Mammary epithelial cell (primary cell): ENCODE measurements at regions of chr19 and their contacts with region 1.

Region 1: DNA sequence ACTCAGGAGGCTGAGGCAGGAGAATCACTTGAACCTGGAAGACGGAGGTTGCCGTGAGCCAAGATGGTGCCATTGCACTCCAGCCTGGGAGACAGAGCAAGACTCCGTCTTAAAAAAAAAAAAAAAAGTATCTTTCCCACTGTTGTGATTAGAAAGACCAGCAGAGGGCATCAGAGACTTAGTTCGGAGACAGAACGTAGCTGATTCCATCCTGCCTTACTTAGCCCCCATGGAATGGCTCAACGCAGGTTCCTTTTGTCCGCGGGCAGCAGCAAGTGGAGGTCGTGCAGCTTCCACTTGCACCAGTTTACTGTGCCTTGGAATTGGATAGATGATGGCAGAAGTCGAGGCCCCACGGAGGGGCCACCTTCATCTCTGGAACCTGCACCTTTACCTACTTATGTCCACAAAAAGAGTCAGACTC is 8.1 kb downstream of the TIMM29 start:
- DNase-seq: peak; percentile 64
- H3K4me3 ChIP-seq: no peak overlapping the region
- H3K27ac ChIP-seq: no peak overlapping the region
- H3K4me1 ChIP-seq: peaks cover 21% of the 10 kb centered on the region
- H3K27me3 ChIP-seq: no peaks in the 10 kb centered on the region
- CTCF ChIP-seq: peak; percentile 44 to 70

Region 2: GRCh38 chr19:10730923-10731322 is 205.8 kb before region 1 on chr19:
- CTCF ChIA-PET with region 1: no interaction called
- dilution Hi-C with region 1: no loop called
- in situ Hi-C with region 1: no loop called
- intact Hi-C with region 1: no loop called
- DNase-seq: no peak
- H3K4me3 ChIP-seq: no peak overlapping the region
- H3K27ac ChIP-seq: no peak overlapping the region
- H3K4me1 ChIP-seq: no peaks in the 10 kb centered on the region
- H3K27me3 ChIP-seq: no peaks in the 10 kb centered on the region
- CTCF ChIP-seq: no peak

Region 3: GRCh38 chr19:10835754-10836477 is 100.8 kb before region 1 on chr19 and contains the start of gene TMED1:
- CTCF ChIA-PET with region 1: interaction called, 11 read pairs
- dilution Hi-C with region 1: no loop called
- in situ Hi-C with region 1: no loop called
- intact Hi-C with region 1: no loop called
- DNase-seq: peak; percentile 99
- H3K4me3 ChIP-seq: peak within 1 kb of the TSS; percentile 65 to 96 (median 73)
- H3K27ac ChIP-seq: peak within 1 kb of the TSS; percentile 93
- H3K4me1 ChIP-seq: peaks cover 17% of the 10 kb centered on the region
- H3K27me3 ChIP-seq: no peaks in the 10 kb centered on the region
- CTCF ChIP-seq: peak in 1 of 2 donors; percentile 31
- total RNA-seq, gene TMED1: 21.3 to 26.7 TPM

Region 4: DNA sequence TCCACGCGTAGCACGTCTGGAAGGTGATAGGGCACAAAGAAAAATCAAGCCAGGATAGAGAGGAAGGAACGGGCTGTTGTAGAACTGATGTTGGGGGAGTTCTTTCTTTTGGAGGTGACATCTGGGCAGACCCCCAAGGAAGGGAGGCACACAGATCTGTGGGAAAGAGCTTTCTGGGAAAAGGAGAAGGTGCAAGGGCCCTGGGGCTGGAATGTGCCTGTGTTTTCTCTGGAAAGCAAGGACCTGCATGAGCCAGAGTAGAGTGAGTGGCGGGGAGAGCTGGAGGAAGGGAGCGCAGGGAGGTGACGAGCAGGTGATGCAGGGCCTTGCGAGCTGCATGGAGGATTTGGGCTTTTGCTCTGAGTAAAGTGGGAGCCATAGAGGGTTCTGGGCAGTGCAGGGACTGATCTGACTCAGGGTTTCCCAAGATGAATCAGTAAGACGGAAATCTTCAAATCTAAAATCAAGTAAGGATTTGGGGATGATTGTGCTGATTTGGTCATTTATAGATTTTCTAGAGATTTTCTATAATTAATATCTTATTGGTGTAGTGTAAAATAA is 54.9 kb after region 1 on chr19:
- CTCF ChIA-PET with region 1: no interaction called
- dilution Hi-C with region 1: no loop called
- in situ Hi-C with region 1: no loop called
- intact Hi-C with region 1: loop called (anchors 5 kb)
- DNase-seq: no peak
- H3K4me3 ChIP-seq: no peak overlapping the region
- H3K27ac ChIP-seq: no peak overlapping the region
- H3K4me1 ChIP-seq: no peaks in the 10 kb centered on the region
- H3K27me3 ChIP-seq: no peaks in the 10 kb centered on the region
- CTCF ChIP-seq: no peak

Region 5: DNA sequence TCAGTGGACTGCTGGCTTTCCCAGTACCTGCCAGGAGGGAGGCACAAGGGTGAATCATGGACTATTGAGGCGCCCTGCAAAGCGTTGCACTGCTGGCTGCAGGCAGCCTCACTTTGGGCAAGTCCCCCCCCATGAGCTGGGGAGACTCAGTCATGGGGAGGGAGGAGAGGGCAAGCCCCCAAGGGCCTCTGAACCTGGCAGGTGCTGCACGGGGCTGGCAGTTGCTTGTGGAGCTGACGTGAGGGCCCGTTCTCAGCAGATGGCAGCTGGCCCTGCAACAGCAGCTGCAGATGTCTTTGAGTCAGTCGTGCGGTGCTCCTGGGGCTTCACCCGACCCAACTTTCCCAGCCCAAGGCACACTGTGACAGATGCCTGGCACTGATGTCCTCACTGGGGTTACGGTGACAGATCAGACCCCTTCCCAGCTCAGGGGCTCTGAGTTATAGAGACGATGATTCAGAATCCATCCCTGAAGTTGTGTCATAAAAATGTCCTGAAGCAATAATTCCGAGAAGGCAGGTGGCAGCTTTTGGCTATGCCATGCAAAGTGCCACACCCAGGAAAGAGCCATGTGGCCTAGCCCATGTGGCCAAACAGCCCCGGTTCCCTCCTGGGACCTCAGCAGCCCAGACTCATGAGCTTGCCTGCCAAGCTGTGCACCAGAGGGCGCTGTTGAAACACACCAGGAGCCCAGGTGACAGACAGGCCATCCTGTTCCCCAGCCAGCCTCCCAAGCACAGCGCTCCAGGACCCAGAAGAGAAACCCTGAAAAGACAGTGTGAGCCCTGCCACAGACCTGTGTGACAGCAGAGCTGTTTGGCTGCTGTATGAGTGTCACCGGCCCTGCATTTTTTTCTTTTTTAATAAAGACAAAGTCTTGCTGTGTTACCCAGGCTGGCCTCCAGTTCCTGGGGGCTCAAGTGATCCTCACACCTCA is 99.0 kb after region 1 on chr19:
- CTCF ChIA-PET with region 1: interaction called, 4 read pairs
- dilution Hi-C with region 1: no loop called
- in situ Hi-C with region 1: no loop called
- intact Hi-C with region 1: loop called (anchors 1 kb)
- DNase-seq: peak; percentile 80
- H3K4me3 ChIP-seq: no peak overlapping the region
- H3K27ac ChIP-seq: no peak overlapping the region
- H3K4me1 ChIP-seq: peaks cover 13% of the 10 kb centered on the region
- H3K27me3 ChIP-seq: no peaks in the 10 kb centered on the region
- CTCF ChIP-seq: peak; percentile 88 to 98

Region 6: DNA sequence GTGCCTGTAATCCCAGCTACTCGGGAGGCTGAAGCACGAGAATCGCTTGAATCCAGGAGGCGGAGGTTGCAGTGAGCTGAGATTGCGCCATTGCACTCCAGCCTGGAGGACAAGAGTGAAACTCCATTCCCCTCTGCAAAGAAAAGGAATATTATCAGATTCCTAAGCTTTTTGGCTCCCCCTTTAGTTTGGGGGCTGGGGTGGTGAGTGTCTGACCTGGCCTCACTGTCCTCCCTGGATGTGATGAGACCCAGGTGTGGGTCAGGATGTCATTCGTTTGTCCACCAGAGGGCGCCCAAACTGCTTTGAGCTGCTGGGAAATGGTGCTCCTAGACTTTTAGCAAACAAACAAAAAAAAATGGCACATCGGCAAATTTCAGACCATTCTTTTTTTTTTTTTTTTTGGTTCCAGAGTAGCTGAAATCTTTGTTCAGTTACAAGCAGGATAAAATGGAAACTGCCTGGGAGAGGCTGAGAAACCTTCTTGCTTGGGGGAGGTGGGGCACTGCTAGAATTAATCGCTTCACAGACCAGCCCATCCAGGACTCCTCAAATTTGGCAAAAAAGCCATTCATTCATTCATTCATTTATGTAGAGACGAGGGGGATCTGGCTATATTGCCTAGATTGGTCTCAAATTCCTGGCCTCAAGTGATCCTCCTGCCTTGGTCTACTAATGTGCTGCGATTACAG is 189.5 kb after region 1 on chr19:
- CTCF ChIA-PET with region 1: interaction called, 3 read pairs
- dilution Hi-C with region 1: no loop called
- in situ Hi-C with region 1: no loop called
- intact Hi-C with region 1: loop called (anchors 1 kb)
- DNase-seq: no peak
- H3K4me3 ChIP-seq: no peak overlapping the region
- H3K27ac ChIP-seq: no peak overlapping the region
- H3K4me1 ChIP-seq: no peaks in the 10 kb centered on the region
- H3K27me3 ChIP-seq: no peaks in the 10 kb centered on the region
- CTCF ChIP-seq: peak; percentile 64 to 77

Region 7: GRCh38 chr19:11324079-11324661 is 387.5 kb after region 1 on chr19:
- CTCF ChIA-PET with region 1: interaction called, 17 read pairs
- dilution Hi-C with region 1: no loop called
- in situ Hi-C with region 1: no loop called
- intact Hi-C with region 1: no loop called
- DNase-seq: peak; percentile 91
- H3K4me3 ChIP-seq: no peak overlapping the region
- H3K27ac ChIP-seq: no peak overlapping the region
- H3K4me1 ChIP-seq: peaks cover 16% of the 10 kb centered on the region
- H3K27me3 ChIP-seq: no peaks in the 10 kb centered on the region
- CTCF ChIP-seq: no peak